Activated CD4-positive, alpha-beta T cell treated with anti-CD3 and anti-CD28 coated beads for 36 hours (primary cell): ENCODE measurements at regions of chr13 and their contacts with region 1.

Region 1: DNA sequence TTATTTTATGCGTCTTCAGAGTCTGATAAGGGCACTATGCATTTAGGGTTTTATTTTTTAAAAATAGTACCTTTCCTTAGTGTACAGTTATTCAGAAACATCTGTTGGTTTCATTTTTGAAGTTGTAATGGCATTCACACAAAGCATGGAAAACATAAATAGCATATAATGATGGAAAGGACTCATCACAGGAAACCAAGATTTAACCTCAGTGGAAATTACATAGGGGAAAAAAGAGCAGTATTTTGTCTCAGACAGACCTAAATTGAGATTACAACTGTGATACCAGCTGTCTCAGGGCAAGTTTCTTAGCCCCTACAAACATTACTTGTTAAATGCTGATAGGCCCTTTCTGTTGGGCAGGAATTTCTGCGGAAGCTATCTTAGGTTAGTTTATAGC is 57.2 kb downstream of the NHLRC3 start:
- DNase-seq: no peak
- ATAC-seq: peak; percentile 85
- H3K4me3 Mint-ChIP-seq: peak overlapping the region; percentile 15
- H3K27ac Mint-ChIP-seq: peak overlapping the region; percentile 75
- H3K4me1 Mint-ChIP-seq: peaks cover 31% of the 10 kb centered on the region
- H3K27me3 Mint-ChIP-seq: no peaks in the 10 kb centered on the region

Region 2: DNA sequence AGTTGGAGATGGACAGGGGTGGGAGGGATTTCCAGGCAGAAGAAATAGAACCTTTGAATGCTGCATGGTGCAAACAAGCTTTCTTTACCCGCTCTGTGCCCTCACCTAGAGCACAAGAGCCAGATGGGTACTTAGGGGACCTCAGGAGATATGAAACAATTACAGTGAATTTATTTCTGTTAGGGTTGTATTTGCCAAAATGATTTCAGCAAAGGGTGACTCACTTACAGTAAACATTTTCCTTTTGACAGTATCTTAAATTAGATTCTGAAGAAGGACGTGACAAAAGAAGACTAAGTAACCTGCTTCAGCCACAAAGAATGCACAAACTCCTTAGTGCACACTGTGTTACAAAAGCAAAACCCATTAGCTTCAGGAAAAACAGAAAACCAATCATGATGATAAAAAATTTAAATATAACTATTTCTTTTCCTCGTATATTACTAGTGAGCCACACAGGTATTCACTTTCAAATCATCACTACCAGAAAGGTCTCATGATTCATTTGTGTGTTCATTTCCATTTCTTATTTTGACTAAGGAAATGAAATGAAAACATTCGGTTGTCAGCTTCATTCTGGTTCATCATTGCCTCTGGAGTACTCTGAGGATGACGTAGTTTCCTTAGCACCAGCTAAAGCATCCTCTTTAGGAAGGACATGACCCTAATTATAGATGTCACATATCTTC is 101.6 kb after region 1 on chr13:
- CTCF ChIA-PET with region 1: no interaction called
- POLR2A ChIA-PET with region 1: no interaction called
- intact Hi-C with region 1: loop called in 1 of 2 experiments (anchors 1 kb)
- DNase-seq: no peak
- ATAC-seq: peak; percentile 89
- H3K4me3 Mint-ChIP-seq: no peak overlapping the region
- H3K27ac Mint-ChIP-seq: peak overlapping the region; percentile 52
- H3K4me1 Mint-ChIP-seq: peaks cover 13% of the 10 kb centered on the region
- H3K27me3 Mint-ChIP-seq: peaks cover 13% of the 10 kb centered on the region